ENCODE measurements at regions of chr18 and their contacts with region 1.

Region 1: DNA sequence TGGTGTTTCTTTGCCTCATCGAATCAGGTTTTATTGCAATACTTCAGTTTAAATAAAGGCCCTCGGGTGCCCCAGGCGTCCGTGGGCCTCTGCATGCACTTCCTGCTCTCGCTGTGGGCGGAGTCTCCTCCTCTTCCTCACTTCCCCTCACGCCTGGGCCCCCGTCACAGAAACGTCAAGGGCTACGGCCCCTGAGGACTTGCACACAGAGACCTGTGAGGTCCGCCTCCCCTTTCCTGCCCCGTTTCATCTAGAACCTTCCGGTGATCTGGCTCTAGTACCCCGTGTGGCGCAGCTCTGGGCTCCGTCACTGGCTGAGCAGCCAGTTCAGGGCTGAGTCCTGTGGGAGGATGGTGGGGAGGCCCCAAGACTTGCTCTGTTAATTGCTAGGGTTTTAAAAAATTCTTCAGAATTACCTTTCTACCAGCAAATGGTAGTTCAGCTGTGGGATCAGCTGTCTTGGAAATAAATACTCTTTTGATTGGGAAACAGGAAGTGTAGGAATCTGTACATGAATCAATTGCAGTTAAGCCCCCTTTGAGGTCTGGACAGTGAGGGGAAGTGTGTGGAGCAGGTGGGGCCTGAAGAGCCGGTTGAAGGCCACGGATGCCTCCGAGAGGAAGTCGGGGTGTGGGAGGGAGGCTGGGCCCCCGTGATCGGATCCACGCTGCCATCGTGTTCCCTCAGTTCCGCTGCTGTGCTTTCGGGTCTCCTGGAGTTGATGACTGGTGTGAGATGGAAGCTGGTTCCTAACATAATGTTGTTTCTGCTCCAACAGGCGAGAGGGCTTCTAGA is 10.2 kb downstream of the NFATC1 start:
- DNase-seq: peak; percentile 81
- ATAC-seq: peak; percentile 89
- H3K4me3 Mint-ChIP-seq: peak overlapping the region; percentile 80
- H3K27ac Mint-ChIP-seq: peak overlapping the region; percentile 98
- H3K4me1 Mint-ChIP-seq: peaks cover 65% of the 10 kb centered on the region
- H3K27me3 Mint-ChIP-seq: no peaks in the 10 kb centered on the region
- CTCF ChIP-seq: no peak

Region 2: DNA sequence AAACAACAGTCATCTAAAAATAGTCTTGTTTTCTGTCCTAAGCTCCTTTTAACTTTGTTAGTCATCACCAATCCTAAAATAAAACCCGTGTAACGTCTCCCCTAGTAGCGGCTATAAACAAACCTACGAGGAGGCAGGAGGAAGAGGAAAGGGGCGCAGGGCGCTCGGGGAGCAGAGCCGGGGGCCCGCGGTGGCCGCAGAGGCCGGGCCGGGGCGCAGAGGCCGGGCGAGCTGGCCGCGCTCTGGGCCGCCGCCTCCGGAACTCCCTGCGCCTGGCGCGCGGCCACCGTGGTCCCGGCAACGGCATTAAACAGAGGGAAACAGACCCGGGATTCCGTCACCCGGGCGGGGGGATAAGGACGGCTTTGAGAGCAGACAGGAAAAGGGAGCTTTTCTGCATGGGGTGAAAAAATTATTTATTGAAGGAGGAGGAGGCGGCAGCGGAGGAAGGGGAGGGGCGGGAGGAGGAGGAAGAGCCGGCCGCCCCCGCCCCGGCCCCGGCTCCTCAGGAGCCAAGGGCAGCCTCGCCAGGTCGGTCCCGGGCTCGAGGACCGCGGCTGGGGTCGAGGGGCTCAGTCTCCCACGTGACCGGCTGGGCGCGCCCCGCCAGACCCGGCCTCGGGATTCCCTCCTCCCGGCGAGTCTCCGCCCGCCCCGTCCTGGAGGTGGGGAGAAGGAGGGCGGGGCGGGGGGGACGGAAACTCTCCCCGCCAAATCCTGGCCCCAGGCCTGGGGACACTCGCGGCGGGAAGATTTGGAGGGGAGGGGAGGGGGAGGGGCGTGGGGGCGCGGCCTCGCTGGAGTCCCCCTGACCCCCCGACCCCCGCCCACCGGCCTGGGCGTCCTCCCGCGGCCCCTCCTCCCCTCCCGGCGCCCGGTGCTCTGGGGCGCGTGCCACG is 12.1 kb before region 1 on chr18:
- CTCF ChIA-PET with region 1: interaction called, 9 read pairs
- POLR2A ChIA-PET with region 1: interaction called, 15 read pairs
- intact Hi-C with region 1: loop called (anchors 1 kb)
- DNase-seq: peak; percentile 52
- ATAC-seq: peak; percentile 13
- H3K4me3 Mint-ChIP-seq: peak overlapping the region; percentile 84
- H3K27ac Mint-ChIP-seq: peak overlapping the region; percentile 71
- H3K4me1 Mint-ChIP-seq: peaks cover 35% of the 10 kb centered on the region
- H3K27me3 Mint-ChIP-seq: no peaks in the 10 kb centered on the region
- CTCF ChIP-seq: no peak

Region 3: DNA sequence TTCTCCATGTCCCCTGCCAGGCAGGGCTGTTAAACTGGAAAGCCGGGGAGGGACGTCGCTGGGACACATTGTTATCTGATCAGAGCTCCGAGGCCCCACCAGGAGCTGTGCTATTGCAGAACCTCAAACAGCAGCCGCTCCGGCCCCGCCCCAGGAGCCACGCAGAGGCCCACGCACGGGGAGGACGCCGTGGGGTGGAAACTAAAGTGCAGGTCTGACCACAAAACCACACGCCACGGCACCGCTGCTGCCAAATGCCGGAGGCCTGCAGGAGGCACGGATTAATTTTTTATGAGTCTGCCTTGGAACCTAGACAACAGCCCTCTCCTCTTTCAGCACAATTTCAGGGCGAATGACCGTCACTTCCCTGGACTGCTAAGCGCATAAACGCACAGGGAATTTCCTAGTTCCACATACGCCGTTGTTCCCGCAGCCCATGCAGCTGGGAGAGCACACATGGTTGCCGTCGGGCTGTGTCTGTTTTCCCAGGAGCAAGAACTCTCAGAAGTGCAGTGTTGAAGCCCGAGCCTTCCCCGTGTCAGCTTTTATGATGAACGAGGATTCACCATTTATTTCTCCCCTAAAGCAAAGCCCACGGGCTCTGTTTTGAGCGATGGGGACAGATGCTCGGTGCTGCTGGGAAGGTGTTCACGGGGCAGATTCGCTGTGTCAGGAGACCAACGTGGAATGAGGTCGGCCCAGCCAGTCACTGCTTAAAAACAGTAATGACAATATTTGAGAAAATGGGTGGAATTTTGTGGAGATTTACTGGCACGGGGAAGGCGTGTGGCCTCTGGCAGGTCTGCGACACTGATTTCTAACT is 33.4 kb after region 1 on chr18:
- CTCF ChIA-PET with region 1: interaction called, 3 read pairs
- POLR2A ChIA-PET with region 1: interaction called, 18 read pairs
- intact Hi-C with region 1: loop called (anchors 1 kb)
- DNase-seq: no peak
- ATAC-seq: no peak
- H3K4me3 Mint-ChIP-seq: peak overlapping the region; percentile 35
- H3K27ac Mint-ChIP-seq: peak overlapping the region; percentile 53
- H3K4me1 Mint-ChIP-seq: peaks cover 82% of the 10 kb centered on the region
- H3K27me3 Mint-ChIP-seq: no peaks in the 10 kb centered on the region
- CTCF ChIP-seq: no peak

Measured in activated B cell treated with CpG ODN at 0.5 μM for 24 hours (primary cell).